ENCODE measurements at regions of chr3 and their contacts with region 1.

Region 1: GRCh38 chr3:129183569-129184395 is at the start of gene CNBP:
- DNase-seq: peak; percentile 65
- ATAC-seq: peak; percentile 97
- H3K4me3 ChIP-seq: peak within 1 kb of the TSS; percentile 97
- H3K27ac ChIP-seq: peak within 1 kb of the TSS; percentile 97
- H3K4me1 ChIP-seq: peaks cover 9% of the 10 kb centered on the region
- H3K27me3 ChIP-seq: no peaks in the 10 kb centered on the region
- CTCF ChIP-seq: no peak
- EP300 ChIP-seq: no peak
- POLR2A ChIP-seq: peak; percentile 98
- RAD21 ChIP-seq: no peak
- polyA plus RNA-seq, gene CNBP: 618 to 719 TPM

Region 2: GRCh38 chr3:129120254-129121004 is 63.4 kb before region 1 on chr3:
- CTCF ChIA-PET with region 1: interaction called, 4 read pairs
- POLR2A ChIA-PET with region 1: interaction called, 20 read pairs
- RAD21 ChIA-PET with region 1: interaction called, 3 read pairs
- SMC1A ChIA-PET with region 1: interaction called, 4 read pairs
- in situ Hi-C with region 1: no loop called
- intact Hi-C with region 1: loop called (anchors 5 kb)
- DNase-seq: peak; percentile 89
- ATAC-seq: peak; percentile 82
- H3K4me3 ChIP-seq: peak overlapping the region; percentile 65
- H3K27ac ChIP-seq: peak overlapping the region; percentile 97
- H3K4me1 ChIP-seq: peaks cover 27% of the 10 kb centered on the region
- H3K27me3 ChIP-seq: no peaks in the 10 kb centered on the region
- CTCF ChIP-seq: peak; percentile 13 to 19 (median 18); a peak in 4 of 6 replicates
- EP300 ChIP-seq: no peak
- POLR2A ChIP-seq: peak; percentile 82
- RAD21 ChIP-seq: 0 out of 2 replicates have a peak, but pooled peaks have one; percentile 27

Measured in GM12878 (cell line).